ENCODE measurements at regions of chr9 and their contacts with region 1.

Region 1: GRCh38 chr9:93682232-93682968 is 106.0 kb downstream of the PHF2 start:
- DNase-seq: peak; percentile 61
- H3K4me3 Mint-ChIP-seq: no peak overlapping the region
- H3K27ac Mint-ChIP-seq: no peak overlapping the region
- H3K4me1 Mint-ChIP-seq: peaks cover 8% of the 10 kb centered on the region
- H3K27me3 Mint-ChIP-seq: no peaks in the 10 kb centered on the region
- CTCF ChIP-seq: peak; percentile 81

Region 2: DNA sequence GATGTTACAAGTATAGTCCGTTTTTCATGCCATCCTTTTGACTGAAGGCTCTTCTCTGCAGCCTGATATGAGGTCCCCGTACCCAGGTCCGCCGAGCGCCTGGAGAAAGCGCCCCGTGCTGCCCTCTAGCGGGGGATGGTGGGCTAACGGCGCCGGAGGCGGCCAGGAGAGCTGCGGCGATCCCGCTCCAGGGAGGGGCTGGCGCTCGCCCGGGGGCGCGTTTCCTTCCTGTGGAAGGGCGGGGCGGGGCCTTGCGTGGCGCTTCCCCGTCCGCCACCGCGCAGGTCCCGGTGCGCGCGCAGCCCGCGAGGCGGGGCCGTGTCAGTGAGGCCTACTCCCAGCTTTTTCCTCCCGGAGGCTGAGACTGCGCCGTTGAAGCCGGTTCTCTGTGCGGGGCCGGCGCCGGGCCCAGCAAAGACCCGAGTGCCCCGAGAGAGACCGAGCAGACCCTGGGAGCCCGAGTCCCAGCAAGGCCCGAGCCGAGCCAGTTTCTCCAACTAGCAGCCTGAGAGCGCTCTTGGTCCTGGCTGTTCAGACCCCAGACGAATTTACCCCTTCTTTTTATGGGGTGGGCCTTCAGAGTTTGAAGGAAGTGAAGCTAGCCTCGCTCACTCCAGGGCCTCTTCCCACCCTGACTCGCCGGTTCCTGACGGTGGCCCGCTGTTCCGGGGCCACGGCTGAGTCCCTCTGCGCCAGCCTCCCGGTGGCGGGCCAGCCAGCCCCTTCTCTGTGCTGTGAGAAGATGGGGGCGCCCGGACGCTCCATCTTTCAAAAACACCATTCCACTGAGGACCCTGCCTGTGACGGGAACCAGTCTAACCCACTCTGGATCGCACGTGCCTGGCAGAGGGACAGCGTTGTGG is 115.8 kb before region 1 on chr9:
- CTCF ChIA-PET with region 1: no interaction called
- POLR2A ChIA-PET with region 1: no interaction called
- intact Hi-C with region 1: no loop called
- DNase-seq: peak; percentile 93
- H3K4me3 Mint-ChIP-seq: peak overlapping the region; percentile 69
- H3K27ac Mint-ChIP-seq: peak overlapping the region; percentile 76
- H3K4me1 Mint-ChIP-seq: peaks cover 5% of the 10 kb centered on the region
- H3K27me3 Mint-ChIP-seq: no peaks in the 10 kb centered on the region
- CTCF ChIP-seq: peak; percentile 94

Region 3: GRCh38 chr9:93600504-93600903 is 81.9 kb before region 1 on chr9:
- CTCF ChIA-PET with region 1: no interaction called
- POLR2A ChIA-PET with region 1: no interaction called
- intact Hi-C with region 1: no loop called
- DNase-seq: no peak
- H3K4me3 Mint-ChIP-seq: no peak overlapping the region
- H3K27ac Mint-ChIP-seq: no peak overlapping the region
- H3K4me1 Mint-ChIP-seq: peaks cover 7% of the 10 kb centered on the region
- H3K27me3 Mint-ChIP-seq: no peaks in the 10 kb centered on the region
- CTCF ChIP-seq: no peak

Region 4: GRCh38 chr9:93697352-93698139 is 15.1 kb after region 1 on chr9:
- CTCF ChIA-PET with region 1: interaction called, 15 read pairs
- POLR2A ChIA-PET with region 1: no interaction called
- intact Hi-C with region 1: no loop called
- DNase-seq: no peak
- H3K4me3 Mint-ChIP-seq: no peak overlapping the region
- H3K27ac Mint-ChIP-seq: no peak overlapping the region
- H3K4me1 Mint-ChIP-seq: no peaks in the 10 kb centered on the region
- H3K27me3 Mint-ChIP-seq: peaks cover 6% of the 10 kb centered on the region
- CTCF ChIP-seq: no peak

Region 5: GRCh38 chr9:93962561-93963440 is 280.4 kb after region 1 on chr9:
- CTCF ChIA-PET with region 1: interaction called, 109 read pairs
- POLR2A ChIA-PET with region 1: no interaction called
- intact Hi-C with region 1: loop called (anchors 1 kb)
- DNase-seq: peak; percentile 92
- H3K4me3 Mint-ChIP-seq: no peak overlapping the region
- H3K27ac Mint-ChIP-seq: peak overlapping the region; percentile 2
- H3K4me1 Mint-ChIP-seq: peaks cover 8% of the 10 kb centered on the region
- H3K27me3 Mint-ChIP-seq: no peaks in the 10 kb centered on the region
- CTCF ChIP-seq: peak; percentile 75

Region 6: GRCh38 chr9:94002316-94003140 is 320.1 kb after region 1 on chr9:
- CTCF ChIA-PET with region 1: interaction called, 5 read pairs
- POLR2A ChIA-PET with region 1: no interaction called
- intact Hi-C with region 1: loop called (anchors 1 kb)
- DNase-seq: peak; percentile 70
- H3K4me3 Mint-ChIP-seq: no peak overlapping the region
- H3K27ac Mint-ChIP-seq: no peak overlapping the region
- H3K4me1 Mint-ChIP-seq: peaks cover 6% of the 10 kb centered on the region
- H3K27me3 Mint-ChIP-seq: peaks cover 12% of the 10 kb centered on the region
- CTCF ChIP-seq: peak; percentile 66

Region 7: DNA sequence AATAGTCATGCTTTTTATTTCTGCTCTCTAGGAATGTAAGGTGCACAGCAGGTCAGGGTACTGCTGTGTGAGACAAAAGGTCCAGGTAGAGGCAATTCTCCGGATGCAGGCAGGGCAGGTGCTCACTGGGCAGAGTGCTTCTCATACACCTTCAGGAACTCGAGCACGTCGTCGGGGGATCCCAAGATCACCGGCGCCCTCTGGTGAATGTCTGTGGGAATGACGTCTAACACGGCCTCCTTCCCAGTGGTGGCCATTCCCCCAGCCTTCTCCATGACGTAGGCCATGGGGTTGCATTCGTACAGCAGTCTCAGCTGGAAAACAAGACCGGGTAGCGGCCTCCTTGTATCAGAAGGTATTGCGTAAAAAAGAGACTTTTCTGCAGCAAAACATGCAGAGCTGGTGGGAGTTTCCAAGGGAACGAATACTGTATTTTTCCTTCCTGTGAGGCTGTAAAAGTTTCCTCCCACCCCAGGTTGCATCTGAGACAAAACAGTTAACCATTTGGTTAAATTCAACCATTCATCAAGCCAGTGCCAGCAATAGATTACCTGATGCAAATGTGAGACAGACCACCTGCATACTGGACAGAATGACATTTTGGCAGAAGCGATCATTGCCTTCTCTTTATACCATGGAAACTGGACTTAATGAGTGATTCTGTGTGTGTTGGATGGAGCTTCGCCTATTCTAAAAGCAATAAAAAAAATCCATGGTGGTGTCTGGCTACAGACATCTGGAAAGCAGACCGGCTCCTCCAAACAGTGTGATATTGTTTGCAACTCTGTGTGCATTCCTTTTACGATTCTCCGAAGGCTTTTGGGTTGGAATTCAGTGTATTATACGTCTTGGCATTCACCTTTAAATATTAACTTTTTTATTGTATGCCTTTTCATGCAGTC is 921.1 kb after region 1 on chr9:
- CTCF ChIA-PET with region 1: no interaction called
- POLR2A ChIA-PET with region 1: no interaction called
- intact Hi-C with region 1: loop called (anchors 10 kb)
- DNase-seq: peak; percentile 77
- H3K4me3 Mint-ChIP-seq: no peak overlapping the region
- H3K27ac Mint-ChIP-seq: no peak overlapping the region
- H3K4me1 Mint-ChIP-seq: no peaks in the 10 kb centered on the region
- H3K27me3 Mint-ChIP-seq: peaks cover 12% of the 10 kb centered on the region
- CTCF ChIP-seq: peak; percentile 62